IMR-90 (cell line): ENCODE measurements at regions of chr3 and their contacts with region 1.

Region 1: DNA sequence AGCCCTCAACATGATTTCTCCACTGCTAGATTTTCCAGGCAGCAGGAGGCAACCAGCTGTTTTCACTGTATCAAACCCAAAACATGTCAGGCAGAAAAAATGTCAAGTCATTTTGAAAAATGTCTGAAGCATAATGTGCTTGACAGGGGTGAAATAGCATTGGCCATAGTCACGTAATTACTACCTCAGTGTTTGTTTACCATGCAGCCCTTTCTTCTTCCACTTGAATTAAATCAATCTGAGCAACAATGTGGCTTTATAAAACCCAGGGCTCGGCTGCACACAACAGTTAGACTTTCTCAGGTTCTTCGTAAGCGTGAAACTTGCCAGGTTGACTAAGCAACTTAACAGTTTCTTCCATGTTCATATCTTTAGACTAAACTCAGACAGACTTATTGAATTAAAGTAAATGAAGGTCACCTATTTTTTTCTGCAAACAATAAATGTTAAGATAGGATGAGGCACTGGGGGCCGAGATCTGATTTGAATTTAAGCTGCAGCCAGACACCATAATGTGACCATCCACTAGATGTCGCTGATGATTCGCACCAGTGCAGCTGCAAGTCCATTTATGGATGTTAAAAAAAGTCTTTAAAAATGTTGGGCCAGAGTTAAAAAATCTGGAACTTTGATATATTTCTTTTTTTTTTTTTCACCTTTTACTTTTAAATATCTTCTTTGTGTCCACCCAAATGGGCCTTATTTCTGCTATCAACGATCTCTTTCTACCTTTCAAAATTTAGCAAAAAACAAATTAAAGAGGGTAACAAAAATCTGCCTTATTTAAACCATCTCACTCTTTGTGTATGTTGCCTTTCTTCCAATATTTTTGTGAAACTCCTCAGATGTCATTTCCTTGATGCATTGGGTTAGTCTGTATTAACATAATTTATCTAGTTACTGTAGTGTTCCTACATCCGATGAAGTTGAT is 305.9 kb downstream of the CACNA2D3 start:
- DNase-seq: peak; percentile 76
- ATAC-seq: peak; percentile 90
- H3K4me3 ChIP-seq: no peak overlapping the region
- H3K27ac ChIP-seq: no peak overlapping the region
- H3K4me1 ChIP-seq: no peaks in the 10 kb centered on the region
- H3K27me3 ChIP-seq: no peaks in the 10 kb centered on the region
- CTCF ChIP-seq: peak; percentile 88
- POLR2A ChIP-seq: no peak
- RAD21 ChIP-seq: peak; percentile 83

Region 2: DNA sequence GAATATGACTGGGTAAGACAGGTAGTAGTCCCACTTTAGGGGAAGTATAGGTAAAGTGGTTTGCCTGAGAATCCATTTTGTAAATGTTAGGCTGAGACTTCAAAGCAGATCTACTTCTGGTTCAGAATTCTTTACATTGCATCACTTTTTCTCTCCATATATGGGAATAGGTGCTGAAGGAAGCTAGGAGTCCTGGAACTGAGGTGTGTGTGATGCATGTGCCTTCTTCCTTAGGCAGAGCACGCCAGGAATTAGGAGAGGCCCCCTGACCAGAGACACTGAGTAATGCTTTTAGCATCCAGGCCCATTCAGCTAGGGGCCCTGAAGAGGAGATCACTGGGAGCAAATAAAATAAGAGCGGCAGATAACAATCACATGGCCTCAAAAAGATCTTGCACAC is 1011.7 kb before region 1 on chr3:
- CTCF ChIA-PET with region 1: no interaction called
- POLR2A ChIA-PET with region 1: no interaction called
- dilution Hi-C with region 1: no loop called
- in situ Hi-C with region 1: no loop called
- intact Hi-C with region 1: no loop called
- DNase-seq: no peak
- ATAC-seq: no peak
- H3K4me3 ChIP-seq: no peak overlapping the region
- H3K27ac ChIP-seq: no peak overlapping the region
- H3K4me1 ChIP-seq: no peaks in the 10 kb centered on the region
- H3K27me3 ChIP-seq: no peaks in the 10 kb centered on the region
- CTCF ChIP-seq: no peak
- POLR2A ChIP-seq: no peak
- RAD21 ChIP-seq: no peak

Region 3: DNA sequence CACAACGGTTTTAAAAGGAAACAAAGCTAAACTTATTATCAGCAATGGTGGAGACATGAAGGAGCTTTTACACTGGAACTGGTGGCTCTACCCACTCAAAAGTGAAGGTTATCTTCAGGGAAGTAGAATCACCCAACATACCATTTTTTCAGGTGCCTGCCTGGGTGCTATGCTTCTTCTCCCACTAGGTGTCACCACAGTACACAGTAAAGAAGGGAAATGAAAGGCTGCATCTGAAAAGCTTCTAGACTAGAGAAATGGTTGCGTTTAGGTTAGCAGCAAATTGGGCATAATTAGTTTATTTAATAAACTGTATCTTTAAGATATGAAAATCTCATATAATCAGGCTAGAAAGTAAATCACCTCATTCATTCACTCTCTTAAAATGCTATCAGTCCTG is 489.6 kb before region 1 on chr3:
- CTCF ChIA-PET with region 1: no interaction called
- POLR2A ChIA-PET with region 1: no interaction called
- dilution Hi-C with region 1: no loop called
- in situ Hi-C with region 1: no loop called
- intact Hi-C with region 1: loop called (anchors 10 kb)
- DNase-seq: peak; percentile 52
- ATAC-seq: peak; percentile 96
- H3K4me3 ChIP-seq: no peak overlapping the region
- H3K27ac ChIP-seq: no peak overlapping the region
- H3K4me1 ChIP-seq: no peaks in the 10 kb centered on the region
- H3K27me3 ChIP-seq: no peaks in the 10 kb centered on the region
- CTCF ChIP-seq: peak; percentile 69
- POLR2A ChIP-seq: no peak
- RAD21 ChIP-seq: peak; percentile 71

Region 4: GRCh38 chr3:54550221-54550977 is 122.2 kb after region 1 on chr3:
- CTCF ChIA-PET with region 1: no interaction called
- POLR2A ChIA-PET with region 1: no interaction called
- dilution Hi-C with region 1: no loop called
- in situ Hi-C with region 1: no loop called
- intact Hi-C with region 1: no loop called
- DNase-seq: no peak
- ATAC-seq: no peak
- H3K4me3 ChIP-seq: no peak overlapping the region
- H3K27ac ChIP-seq: no peak overlapping the region
- H3K4me1 ChIP-seq: no peaks in the 10 kb centered on the region
- H3K27me3 ChIP-seq: no peaks in the 10 kb centered on the region
- CTCF ChIP-seq: no peak
- POLR2A ChIP-seq: no peak
- RAD21 ChIP-seq: no peak

Region 5: DNA sequence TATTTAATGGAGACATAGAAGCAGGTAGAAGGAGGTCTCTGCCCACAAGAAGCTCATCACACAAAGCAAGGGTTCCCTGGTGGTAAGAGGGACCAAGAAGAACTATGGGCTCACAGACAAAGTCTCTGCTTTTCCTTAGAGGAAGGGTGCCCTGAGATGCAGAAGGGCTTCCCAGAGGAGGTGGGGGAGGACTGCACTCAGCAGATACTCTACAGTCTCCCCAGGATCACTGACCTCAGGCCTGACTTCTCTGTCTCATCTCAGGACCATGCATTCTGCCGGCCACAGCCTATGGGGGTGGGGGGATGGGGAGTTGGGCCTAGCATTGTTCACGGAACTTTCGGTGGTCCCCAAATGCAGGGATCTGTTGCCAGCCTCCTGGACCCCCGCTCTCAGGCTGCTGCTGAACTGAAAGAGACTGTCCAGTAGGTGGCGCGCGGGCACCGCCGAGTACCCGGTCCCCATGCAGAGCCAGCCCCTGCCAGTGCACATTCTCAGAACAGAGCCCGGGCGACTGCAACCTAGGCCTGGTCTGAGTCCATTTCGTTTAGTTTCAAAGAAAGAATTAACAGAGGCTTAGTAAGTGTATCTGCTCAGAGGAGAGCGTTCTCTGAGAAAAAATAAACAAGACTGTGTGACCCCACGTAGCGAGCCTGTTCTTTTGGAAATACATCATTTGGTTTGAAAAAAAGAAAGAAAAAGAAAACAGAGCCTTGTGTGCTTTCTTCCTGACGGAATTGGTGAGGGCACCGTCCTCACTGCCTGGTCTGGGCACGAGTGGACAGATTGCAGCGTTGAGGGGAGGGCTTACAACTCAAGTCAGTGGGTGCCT is 425.6 kb after region 1 on chr3:
- CTCF ChIA-PET with region 1: no interaction called
- POLR2A ChIA-PET with region 1: no interaction called
- dilution Hi-C with region 1: no loop called
- in situ Hi-C with region 1: loop called (anchors 25 kb)
- intact Hi-C with region 1: loop called (anchors 1 kb)
- DNase-seq: peak; percentile 74
- ATAC-seq: peak; percentile 98
- H3K4me3 ChIP-seq: no peak overlapping the region
- H3K27ac ChIP-seq: peak overlapping the region; percentile 79
- H3K4me1 ChIP-seq: peaks cover 8% of the 10 kb centered on the region
- H3K27me3 ChIP-seq: peaks cover 5% of the 10 kb centered on the region; the same call in 1 of the 2 replicates
- CTCF ChIP-seq: peak; percentile 83
- POLR2A ChIP-seq: no peak
- RAD21 ChIP-seq: peak; percentile 93

Region 6: DNA sequence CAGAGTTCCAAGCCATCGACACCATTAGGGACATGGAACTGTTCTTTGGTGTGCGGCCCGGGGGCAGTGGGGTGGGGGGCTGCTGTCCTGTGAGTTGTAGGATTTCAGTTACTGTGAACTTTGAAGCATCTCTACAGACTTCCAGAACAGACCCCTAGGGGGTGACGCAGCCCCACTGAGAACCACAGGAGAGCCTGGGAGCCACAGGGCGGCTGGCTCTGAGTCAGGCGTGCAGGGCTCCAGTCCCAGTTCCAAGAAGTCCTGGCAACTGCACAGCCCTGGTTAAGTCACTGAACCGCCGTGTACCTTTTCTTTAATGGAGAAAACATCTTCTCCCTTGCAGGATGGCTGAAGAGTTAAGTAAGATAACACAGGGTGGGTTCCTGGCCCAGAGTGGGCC is 523.2 kb after region 1 on chr3:
- CTCF ChIA-PET with region 1: interaction called, 5 read pairs
- POLR2A ChIA-PET with region 1: no interaction called
- dilution Hi-C with region 1: no loop called
- in situ Hi-C with region 1: no loop called
- intact Hi-C with region 1: loop called (anchors 2 kb)
- DNase-seq: peak; percentile 93
- ATAC-seq: peak; percentile 89
- H3K4me3 ChIP-seq: no peak overlapping the region
- H3K27ac ChIP-seq: peak overlapping the region; percentile 29
- H3K4me1 ChIP-seq: peaks cover 18% of the 10 kb centered on the region
- H3K27me3 ChIP-seq: no peaks in the 10 kb centered on the region
- CTCF ChIP-seq: peak; percentile 92
- POLR2A ChIP-seq: peak; percentile 53; the same call in 1 of the 2 replicates
- RAD21 ChIP-seq: peak; percentile 99

Region 7: GRCh38 chr3:56251343-56251945 is 1823.2 kb after region 1 on chr3:
- CTCF ChIA-PET with region 1: interaction called, 7 read pairs
- POLR2A ChIA-PET with region 1: no interaction called
- dilution Hi-C with region 1: no loop called
- in situ Hi-C with region 1: loop called (anchors 10 kb)
- intact Hi-C with region 1: loop called (anchors 2 kb)
- DNase-seq: peak; percentile 51
- ATAC-seq: peak; percentile 79
- H3K4me3 ChIP-seq: no peak overlapping the region
- H3K27ac ChIP-seq: no peak overlapping the region
- H3K4me1 ChIP-seq: no peaks in the 10 kb centered on the region
- H3K27me3 ChIP-seq: peaks cover 2% of the 10 kb centered on the region; the same call in 1 of the 2 replicates
- CTCF ChIP-seq: peak; percentile 79
- POLR2A ChIP-seq: no peak
- RAD21 ChIP-seq: peak; percentile 79